ENCODE measurements at regions of chr3 and their contacts with region 1.

Region 1: DNA sequence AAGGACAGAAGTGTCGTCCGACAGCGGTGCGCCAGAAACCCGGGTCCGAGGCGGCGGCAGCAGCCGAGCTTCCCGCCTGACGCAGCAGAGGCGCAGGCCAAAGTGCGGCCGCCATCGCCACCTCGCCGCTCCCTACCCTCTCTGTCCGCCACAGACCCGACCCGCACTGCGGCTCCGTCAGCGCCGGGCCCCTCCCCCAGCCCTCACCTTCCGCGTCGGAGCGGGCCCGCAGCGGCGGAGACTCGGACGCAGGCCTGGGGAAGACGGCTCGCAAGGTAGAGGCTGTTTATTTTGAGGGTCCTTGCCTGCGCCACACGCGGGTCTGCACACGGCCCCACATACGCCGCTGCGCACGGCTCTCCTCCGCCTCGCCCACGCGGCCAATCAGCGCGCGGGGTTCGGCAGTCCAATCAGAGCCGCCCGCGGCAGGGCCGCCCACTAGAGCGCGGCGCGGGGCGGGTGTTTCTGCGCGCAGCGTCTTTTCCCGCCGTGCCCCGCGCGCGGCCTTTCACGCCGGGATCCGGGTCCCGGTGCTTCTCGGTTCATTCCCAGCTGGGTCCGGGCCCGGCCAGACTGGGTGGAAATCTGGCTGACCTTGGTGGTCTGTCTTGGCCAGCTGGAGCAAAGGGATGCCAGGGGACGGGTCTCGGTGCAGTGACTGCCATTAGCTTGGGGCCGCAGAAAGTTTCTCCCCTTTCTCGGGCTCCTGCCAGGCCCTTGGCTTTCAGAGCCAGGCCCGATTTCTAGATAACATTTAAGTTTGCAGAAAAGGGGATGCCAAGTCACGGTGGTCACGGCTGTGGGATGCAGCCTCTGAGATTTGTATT is at the start of gene CNBP:
- DNase-seq: peak; percentile 78
- ATAC-seq: peak; percentile 97
- H3K4me3 ChIP-seq: peak within 1 kb of the TSS; percentile 73 to 99
- H3K27ac ChIP-seq: peak within 1 kb of the TSS; percentile 99
- H3K4me1 ChIP-seq: peaks cover 7 to 32% of the 10 kb centered on the region in 2 experiments
- H3K27me3 ChIP-seq: no peaks in the 10 kb centered on the region
- CTCF ChIP-seq: no peak
- POLR2A ChIP-seq: no peak
- RAD21 ChIP-seq: no peak; the same call in 1 of the 2 replicates
- total RNA-seq, gene CNBP: 353 TPM

Region 2: DNA sequence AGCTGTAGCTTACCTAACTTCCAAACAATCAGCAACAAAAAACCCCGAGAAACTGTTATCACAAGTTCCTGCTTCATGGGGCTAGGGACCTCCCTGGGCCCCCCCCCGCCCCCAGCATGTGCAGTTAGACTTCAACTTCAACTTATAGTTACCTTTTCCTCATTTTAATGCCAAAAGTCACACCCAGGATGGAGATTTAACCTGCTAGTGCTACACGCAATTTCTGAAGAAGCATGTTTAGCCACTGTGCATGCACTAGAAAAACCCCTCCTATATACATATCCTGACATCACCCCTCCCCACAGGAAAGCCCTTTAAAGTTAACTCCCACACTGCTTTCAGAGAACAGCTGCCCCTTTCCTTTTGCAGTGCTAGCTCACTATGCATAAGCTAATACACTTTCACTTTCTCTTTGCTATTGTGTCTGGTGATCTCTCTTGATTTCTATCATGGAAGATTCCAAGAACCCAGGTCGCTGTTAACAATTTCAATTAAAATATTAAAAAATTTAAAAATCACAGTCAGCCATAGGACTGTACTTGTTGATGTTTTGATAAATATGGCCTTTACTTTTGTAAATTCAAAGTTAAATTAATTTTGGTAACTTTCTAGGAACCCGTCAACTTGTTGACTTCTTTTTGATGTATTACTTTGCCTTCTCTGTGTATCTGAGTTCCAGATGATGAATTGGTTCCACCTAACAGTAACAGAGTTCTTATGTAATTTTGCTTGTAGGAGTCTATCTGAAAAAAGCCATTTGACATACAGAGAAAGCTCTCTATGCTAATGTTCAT is 379.6 kb before region 1 on chr3:
- CTCF ChIA-PET with region 1: no interaction called
- POLR2A ChIA-PET with region 1: no interaction called
- RAD21 ChIA-PET with region 1: no interaction called
- intact Hi-C with region 1: no loop called
- DNase-seq: no peak
- ATAC-seq: no peak
- H3K4me3 ChIP-seq: no peak overlapping the region
- H3K27ac ChIP-seq: no peak overlapping the region
- H3K4me1 ChIP-seq: peaks cover 0 to 31% of the 10 kb centered on the region in 2 experiments; a peak in 2 of 4 replicates
- H3K27me3 ChIP-seq: no peaks in the 10 kb centered on the region
- CTCF ChIP-seq: no peak
- POLR2A ChIP-seq: no peak
- RAD21 ChIP-seq: no peak

Region 3: DNA sequence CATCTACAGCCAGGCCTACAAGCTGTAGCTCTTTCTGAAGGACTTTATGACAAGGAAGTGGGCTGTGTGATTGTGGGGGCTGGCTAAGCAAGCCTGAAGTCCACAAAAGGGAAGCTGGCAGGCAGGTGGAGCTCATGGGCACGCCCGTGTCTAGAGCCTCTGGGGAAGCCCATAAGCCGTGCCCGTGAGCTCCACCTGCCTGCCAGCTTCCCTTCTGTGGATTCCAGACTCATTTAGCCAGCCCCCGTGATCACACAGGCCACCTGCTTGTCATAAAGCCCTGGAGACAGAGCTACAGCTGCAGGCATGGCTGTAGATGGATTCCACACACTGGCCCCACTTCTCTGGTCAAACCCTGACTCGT is 167.4 kb before region 1 on chr3:
- CTCF ChIA-PET with region 1: no interaction called
- POLR2A ChIA-PET with region 1: no interaction called
- RAD21 ChIA-PET with region 1: no interaction called
- intact Hi-C with region 1: no loop called
- DNase-seq: no peak
- ATAC-seq: peak; percentile 89
- H3K4me3 ChIP-seq: no peak overlapping the region
- H3K27ac ChIP-seq: no peak overlapping the region
- H3K4me1 ChIP-seq: peaks cover 19 to 25% of the 10 kb centered on the region in 2 experiments
- H3K27me3 ChIP-seq: no peaks in the 10 kb centered on the region
- CTCF ChIP-seq: peak; percentile 10 to 46 (median 44); a peak in 3 of 6 replicates
- POLR2A ChIP-seq: no peak
- RAD21 ChIP-seq: no peak; the same call in 1 of the 2 replicates

Region 4: DNA sequence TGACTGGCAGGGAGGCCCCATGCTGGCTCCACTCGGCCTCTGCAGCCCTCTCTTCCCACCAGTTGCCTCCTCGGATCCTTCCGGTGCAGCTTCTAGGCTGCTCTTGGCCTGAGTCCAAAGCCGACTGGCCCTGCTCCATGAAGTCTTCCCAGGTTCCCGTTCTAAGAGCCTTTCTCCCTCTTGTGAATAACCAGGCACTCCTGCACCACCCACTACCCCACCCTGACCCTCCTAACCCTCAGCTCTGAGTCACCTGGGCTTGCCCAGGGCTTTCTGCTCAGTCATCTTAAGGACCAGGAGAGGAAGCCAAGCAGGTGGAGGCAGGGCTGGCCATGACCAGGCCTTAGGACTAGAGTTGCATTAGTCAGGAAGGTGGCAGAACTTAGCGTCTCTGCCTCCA is 28.0 kb after region 1 on chr3:
- CTCF ChIA-PET with region 1: no interaction called
- POLR2A ChIA-PET with region 1: interaction called, 7 read pairs
- RAD21 ChIA-PET with region 1: no interaction called
- intact Hi-C with region 1: loop called (anchors 2 kb)
- DNase-seq: peak; percentile 98
- ATAC-seq: peak; percentile 98
- H3K4me3 ChIP-seq: peak overlapping the region; percentile 15 to 39; a peak in 2 of 4 replicates
- H3K27ac ChIP-seq: peak overlapping the region; percentile 76
- H3K4me1 ChIP-seq: peaks cover 21 to 29% of the 10 kb centered on the region in 2 experiments
- H3K27me3 ChIP-seq: no peaks in the 10 kb centered on the region
- CTCF ChIP-seq: no peak
- POLR2A ChIP-seq: peak; percentile 59
- RAD21 ChIP-seq: peak; percentile 47; the same call in 1 of the 2 replicates

Region 5: DNA sequence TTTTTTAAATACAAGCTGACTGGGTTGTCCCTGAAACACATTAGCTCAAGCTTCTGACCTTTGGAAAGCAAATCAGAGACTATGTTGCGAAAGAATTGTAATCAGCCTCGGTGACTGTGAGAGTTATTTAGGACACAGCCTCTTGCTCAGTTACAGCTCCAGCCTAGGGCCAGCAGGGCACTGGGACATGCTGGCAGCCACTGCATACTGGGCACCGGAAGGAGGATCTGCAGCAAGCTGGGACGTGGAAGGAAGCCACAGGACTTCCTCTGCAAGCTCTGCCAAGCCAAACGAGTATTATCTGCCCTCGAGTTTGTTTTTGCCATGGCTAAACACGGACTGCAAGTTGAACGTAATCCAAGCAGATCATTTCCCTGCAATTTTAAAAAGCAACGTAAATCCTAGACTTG is 41.2 kb after region 1 on chr3:
- CTCF ChIA-PET with region 1: no interaction called
- POLR2A ChIA-PET with region 1: interaction called, 4 read pairs
- RAD21 ChIA-PET with region 1: no interaction called
- intact Hi-C with region 1: loop called (anchors 5 kb)
- DNase-seq: no peak
- ATAC-seq: peak; percentile 61
- H3K4me3 ChIP-seq: peak overlapping the region in 1 of 2 experiments; percentile 17; a peak in 1 of 4 replicates
- H3K27ac ChIP-seq: peak overlapping the region; percentile 44
- H3K4me1 ChIP-seq: peaks cover 29 to 52% of the 10 kb centered on the region in 2 experiments
- H3K27me3 ChIP-seq: no peaks in the 10 kb centered on the region
- CTCF ChIP-seq: no peak
- POLR2A ChIP-seq: no peak
- RAD21 ChIP-seq: no peak

Measured in HCT116 (cell line).